PC-9 (cell line): ENCODE measurements at regions of chr2 and their contacts with region 1.

Region 1: GRCh38 chr2:186648130-186648529 is 45.7 kb upstream of the FAM171B start:
- DNase-seq: no peak
- H3K4me3 ChIP-seq: no peak overlapping the region
- H3K27ac ChIP-seq: no peak overlapping the region
- H3K4me1 ChIP-seq: no peaks in the 10 kb centered on the region
- H3K27me3 ChIP-seq: no peaks in the 10 kb centered on the region
- CTCF ChIP-seq: no peak

Region 2: GRCh38 chr2:185952098-185952497 is 696.0 kb before region 1 on chr2:
- CTCF ChIA-PET with region 1: no interaction called
- POLR2A ChIA-PET with region 1: no interaction called
- intact Hi-C with region 1: no loop called
- DNase-seq: no peak
- H3K4me3 ChIP-seq: no peak overlapping the region
- H3K27ac ChIP-seq: no peak overlapping the region
- H3K4me1 ChIP-seq: no peaks in the 10 kb centered on the region
- H3K27me3 ChIP-seq: no peaks in the 10 kb centered on the region
- CTCF ChIP-seq: no peak

Region 3: DNA sequence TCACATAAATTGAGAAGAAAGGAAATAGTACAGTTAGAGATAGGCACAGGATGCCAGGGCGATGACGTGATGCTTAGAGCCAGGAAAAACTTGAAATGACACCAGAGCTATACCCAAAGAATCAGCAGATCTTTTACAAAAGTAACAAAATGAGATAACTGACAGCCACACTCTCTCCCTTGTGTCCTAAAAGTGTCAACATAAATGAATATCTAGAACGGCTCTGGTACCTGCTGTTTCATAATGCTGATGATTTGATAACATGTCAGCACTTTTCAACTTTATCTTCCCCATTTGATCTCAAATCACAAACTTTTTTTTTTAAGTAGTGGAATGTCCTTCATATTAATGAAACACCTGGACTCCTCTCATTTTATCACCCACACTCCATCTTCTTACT is 207.6 kb before region 1 on chr2:
- CTCF ChIA-PET with region 1: no interaction called
- POLR2A ChIA-PET with region 1: no interaction called
- intact Hi-C with region 1: no loop called
- DNase-seq: no peak
- H3K4me3 ChIP-seq: no peak overlapping the region
- H3K27ac ChIP-seq: no peak overlapping the region
- H3K4me1 ChIP-seq: no peaks in the 10 kb centered on the region
- H3K27me3 ChIP-seq: no peaks in the 10 kb centered on the region
- CTCF ChIP-seq: no peak

Region 4: GRCh38 chr2:186518945-186519344 is 129.2 kb before region 1 on chr2:
- CTCF ChIA-PET with region 1: no interaction called
- POLR2A ChIA-PET with region 1: interaction called, 13 read pairs
- intact Hi-C with region 1: no loop called
- DNase-seq: no peak
- H3K4me3 ChIP-seq: no peak overlapping the region
- H3K27ac ChIP-seq: no peak overlapping the region
- H3K4me1 ChIP-seq: no peaks in the 10 kb centered on the region
- H3K27me3 ChIP-seq: no peaks in the 10 kb centered on the region
- CTCF ChIP-seq: no peak

Region 5: DNA sequence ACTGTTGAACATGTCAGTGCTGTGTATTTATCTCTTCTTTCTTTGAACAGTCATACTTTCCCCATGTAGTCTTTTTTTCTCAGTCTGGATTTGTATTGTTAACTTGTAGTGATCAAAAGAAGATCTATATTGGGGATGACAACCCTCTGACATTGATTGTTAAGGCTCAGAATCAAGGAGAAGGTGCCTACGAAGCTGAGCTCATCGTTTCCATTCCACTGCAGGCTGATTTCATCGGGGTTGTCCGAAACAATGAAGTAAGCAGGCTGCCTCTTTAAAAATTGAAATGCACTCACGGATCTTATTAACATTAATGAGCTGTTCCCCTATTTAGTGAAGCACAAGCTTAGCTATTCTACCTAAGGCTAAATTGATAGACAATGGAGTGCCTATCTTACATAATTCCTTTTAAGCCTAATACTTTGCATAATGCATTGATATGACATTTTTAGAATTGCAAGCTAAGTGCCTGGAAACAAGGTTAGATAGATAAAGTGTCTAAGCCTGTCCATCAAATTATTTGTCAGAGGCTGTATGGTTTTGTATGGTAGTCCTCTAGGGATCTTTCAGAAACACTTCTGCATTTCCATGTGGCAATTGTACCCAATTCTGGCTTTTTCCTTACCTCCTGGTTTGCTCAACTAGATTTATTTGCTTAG is 16.4 kb after region 1 on chr2:
- CTCF ChIA-PET with region 1: no interaction called
- POLR2A ChIA-PET with region 1: no interaction called
- intact Hi-C with region 1: no loop called
- DNase-seq: no peak
- H3K4me3 ChIP-seq: no peak overlapping the region
- H3K27ac ChIP-seq: no peak overlapping the region
- H3K4me1 ChIP-seq: no peaks in the 10 kb centered on the region
- H3K27me3 ChIP-seq: no peaks in the 10 kb centered on the region
- CTCF ChIP-seq: no peak